ENCODE measurements at regions of chr1 and their contacts with region 1.

Region 1: DNA sequence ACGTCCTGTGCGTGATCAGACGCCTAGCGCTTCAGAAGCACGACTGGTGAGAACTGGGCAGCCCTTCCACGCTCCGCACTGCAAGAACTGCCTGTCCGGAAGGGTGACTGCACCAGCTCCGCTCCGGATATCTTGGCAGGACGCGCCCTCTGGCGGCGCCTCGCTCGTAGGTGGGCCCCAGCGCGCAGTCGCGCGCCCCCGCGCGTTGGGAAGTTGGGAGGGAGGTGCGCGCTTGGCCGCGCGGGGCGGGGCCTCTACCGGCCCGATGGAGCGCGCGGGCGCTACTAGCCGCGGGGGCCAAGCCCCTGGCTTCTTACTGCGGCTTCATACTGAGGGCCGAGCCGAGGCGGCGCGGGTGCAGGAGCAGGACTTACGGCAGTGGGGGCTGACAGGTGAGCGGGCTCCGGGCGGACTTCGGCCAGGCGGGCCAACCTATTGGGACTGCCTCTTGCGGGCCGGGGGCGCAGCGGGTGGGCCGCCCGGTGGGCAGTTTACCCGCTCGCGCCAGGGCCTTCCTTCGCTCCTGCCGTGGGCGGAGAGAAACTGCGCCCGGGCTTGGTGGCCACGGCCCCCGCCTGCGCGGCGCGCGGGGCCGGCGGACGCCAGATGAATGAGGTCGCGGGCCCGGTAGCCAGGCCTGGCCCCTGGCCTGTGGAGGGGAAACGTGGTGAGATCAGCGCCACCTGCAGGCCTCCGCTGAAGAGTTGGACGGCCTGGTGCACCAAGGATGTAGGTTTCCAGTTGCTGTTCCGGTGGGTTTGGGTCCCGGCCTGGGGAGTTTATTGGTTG is at the start of gene CHD1L:
- DNase-seq: peak; percentile 92 to 93
- H3K4me3 ChIP-seq: peak within 1 kb of the TSS; percentile 71 to 92 (median 89)
- H3K27ac ChIP-seq: peak within 1 kb of the TSS; percentile 75 to 90
- H3K4me1 ChIP-seq: no peaks in the 10 kb centered on the region
- H3K27me3 ChIP-seq: no peaks in the 10 kb centered on the region
- CTCF ChIP-seq: peak; percentile 71 to 80 (median 76)
- POLR2A ChIP-seq: no peak
- total RNA-seq, gene CHD1L: 16.2 to 27.9 (median 26.3) TPM

Region 2: DNA sequence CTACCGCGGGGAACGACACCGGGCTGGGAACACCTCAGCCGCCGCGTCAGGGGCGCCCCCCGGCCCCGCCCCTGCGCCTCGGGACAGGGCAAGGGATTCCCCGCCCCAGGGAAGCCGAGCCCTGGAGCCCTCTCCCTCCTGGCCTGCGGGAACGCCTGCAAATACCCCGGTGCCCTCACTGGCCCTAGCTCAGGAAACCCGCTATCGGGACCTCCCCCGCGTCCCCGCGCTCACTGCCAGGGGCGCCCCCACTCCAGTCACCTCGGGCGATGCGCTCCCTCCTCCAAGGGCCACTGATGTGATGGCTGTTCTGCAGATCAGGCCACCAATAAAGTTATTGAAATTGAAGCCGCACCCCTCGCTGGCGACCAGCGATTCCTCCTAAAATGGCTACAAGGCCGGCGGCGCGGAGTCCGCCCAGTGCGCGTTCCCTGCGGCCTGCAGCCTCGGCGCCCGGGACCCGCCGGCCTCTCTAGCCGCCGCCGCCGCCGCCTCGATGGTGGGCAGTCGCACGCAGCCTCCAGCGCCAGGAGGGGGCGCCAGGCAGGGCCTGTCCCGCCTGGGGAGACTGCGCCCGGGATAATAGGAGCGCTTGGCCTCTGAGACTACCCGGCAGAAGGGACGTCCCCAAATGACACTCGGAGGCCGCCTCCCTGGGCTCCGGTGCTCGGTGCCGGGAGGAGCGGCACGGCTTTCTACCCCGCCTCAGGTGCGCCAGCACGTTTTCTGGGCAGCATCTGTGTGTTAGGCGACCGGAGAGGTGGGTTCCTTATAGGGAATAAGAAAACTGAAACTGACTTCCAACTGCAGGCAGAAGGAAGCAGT is 70.3 kb before region 1 on chr1 and contains the start of gene PRKAB2:
- intact Hi-C with region 1: loop called (anchors 10 kb)
- DNase-seq: peak; percentile 92 to 95
- H3K4me3 ChIP-seq: peak within 1 kb of the TSS; percentile 84 to 98 (median 95)
- H3K27ac ChIP-seq: peak within 1 kb of the TSS; percentile 85 to 94
- H3K4me1 ChIP-seq: peaks cover 0 to 15% of the 10 kb centered on the region in 2 donors
- H3K27me3 ChIP-seq: no peaks in the 10 kb centered on the region
- CTCF ChIP-seq: peak; percentile 74 to 94 (median 83)
- POLR2A ChIP-seq: no peak
- total RNA-seq, gene PRKAB2: 14.1 to 16.8 (median 14.1) TPM

Region 3: DNA sequence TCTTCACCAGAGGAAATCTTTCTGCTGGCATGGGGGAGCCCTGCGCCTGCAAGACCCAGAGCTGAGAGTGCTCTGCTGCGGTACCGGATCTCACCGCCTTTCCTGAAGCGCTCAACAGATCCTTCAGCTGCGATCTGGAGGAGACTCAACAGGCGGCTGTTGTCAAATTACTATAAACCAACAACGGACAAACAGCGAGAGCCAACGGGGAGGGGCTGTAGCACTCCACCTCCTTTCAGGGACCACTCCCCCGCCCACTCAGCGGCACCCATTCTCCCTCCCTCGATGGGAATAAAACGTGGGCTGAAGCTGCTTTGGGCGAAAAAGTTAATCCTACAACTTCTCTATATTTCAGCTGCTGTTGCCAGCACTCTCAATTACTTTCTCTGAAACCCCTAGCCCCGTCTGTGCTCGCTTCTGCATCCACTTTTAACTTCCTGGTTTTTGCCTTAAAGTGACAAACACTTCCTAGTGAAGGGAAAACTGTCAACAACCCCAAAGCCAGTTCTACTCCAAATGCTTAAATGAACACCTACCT is 17.4 kb before region 1 on chr1 and contains the start of gene FMO5:
- intact Hi-C with region 1: loop called (anchors 2 kb)
- DNase-seq: peak; percentile 57 to 73
- H3K4me3 ChIP-seq: peak within 1 kb of the TSS; percentile 59 to 68 (median 65)
- H3K27ac ChIP-seq: peak within 1 kb of the TSS; percentile 84 to 95
- H3K4me1 ChIP-seq: no peaks in the 10 kb centered on the region
- H3K27me3 ChIP-seq: no peaks in the 10 kb centered on the region
- CTCF ChIP-seq: peak in 2 of 3 donors; percentile 50 to 55
- POLR2A ChIP-seq: peak; percentile 14
- total RNA-seq, gene FMO5: 7.8 to 32.6 (median 22.0) TPM

Measured in breast epithelium (tissue), 4 donors.